Heart right ventricle (tissue), 16 donors: ENCODE measurements at regions of chr5 and their contacts with region 1.

Region 1: DNA sequence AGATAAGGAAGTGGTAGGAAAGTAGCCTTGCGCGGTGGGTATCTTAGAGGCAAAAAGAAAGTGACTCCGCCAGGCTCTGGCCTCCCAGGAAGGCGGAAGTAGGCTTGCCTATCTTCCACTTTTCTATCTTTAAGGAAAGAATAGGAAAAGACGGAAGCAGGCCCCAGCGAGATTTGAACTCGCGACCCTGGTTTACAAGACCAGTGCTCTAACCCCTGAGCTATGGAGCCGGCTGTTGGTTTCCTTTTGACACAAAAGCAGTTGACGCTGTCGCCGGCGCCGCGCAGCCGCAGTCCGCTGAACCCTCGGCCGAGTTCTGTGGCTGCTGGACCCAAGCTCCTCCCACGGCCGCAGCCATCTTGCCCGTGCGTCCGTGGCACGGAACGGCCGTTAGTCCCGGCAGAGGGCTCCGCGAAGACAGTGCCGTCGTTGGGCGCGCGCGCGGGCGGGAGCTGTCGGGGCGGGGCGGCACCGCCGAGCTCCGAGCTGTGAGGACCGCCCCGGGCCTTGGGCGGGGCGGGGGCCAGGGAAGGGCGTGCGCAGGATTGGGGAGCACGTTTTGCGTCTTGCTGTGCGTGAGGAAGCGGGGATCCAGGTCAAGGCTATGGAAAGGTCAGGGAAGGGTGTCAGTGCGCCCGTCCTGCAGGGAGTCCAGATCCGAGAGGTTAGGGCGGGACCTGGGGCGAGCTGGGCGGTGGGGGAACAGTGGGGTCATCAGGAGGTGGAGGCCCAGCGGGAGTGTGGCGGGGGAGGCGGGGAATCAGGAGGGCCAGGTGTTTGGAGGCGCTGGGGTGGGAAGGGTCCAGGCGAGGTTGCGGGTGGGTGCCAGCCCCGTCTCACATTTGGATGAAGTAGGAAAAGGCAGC is 13.2 kb downstream of the TRIM7 start:
- DNase-seq: peak; percentile 94 to 96
- ATAC-seq: peak; percentile 79 to 90 (median 82)
- H3K4me3 ChIP-seq: peak overlapping the region; percentile 66 to 96 (median 81)
- H3K27ac ChIP-seq: peak overlapping the region; percentile 84 to 96 (median 92)
- H3K4me1 ChIP-seq: peaks cover 3 to 51% (median 24%) of the 10 kb centered on the region in 9 donors
- H3K27me3 ChIP-seq: peaks cover 0 to 5% (median 0%) of the 10 kb centered on the region in 7 donors
- CTCF ChIP-seq: peak in 3 of 9 donors; percentile 19 to 33 (median 23)

Region 2: DNA sequence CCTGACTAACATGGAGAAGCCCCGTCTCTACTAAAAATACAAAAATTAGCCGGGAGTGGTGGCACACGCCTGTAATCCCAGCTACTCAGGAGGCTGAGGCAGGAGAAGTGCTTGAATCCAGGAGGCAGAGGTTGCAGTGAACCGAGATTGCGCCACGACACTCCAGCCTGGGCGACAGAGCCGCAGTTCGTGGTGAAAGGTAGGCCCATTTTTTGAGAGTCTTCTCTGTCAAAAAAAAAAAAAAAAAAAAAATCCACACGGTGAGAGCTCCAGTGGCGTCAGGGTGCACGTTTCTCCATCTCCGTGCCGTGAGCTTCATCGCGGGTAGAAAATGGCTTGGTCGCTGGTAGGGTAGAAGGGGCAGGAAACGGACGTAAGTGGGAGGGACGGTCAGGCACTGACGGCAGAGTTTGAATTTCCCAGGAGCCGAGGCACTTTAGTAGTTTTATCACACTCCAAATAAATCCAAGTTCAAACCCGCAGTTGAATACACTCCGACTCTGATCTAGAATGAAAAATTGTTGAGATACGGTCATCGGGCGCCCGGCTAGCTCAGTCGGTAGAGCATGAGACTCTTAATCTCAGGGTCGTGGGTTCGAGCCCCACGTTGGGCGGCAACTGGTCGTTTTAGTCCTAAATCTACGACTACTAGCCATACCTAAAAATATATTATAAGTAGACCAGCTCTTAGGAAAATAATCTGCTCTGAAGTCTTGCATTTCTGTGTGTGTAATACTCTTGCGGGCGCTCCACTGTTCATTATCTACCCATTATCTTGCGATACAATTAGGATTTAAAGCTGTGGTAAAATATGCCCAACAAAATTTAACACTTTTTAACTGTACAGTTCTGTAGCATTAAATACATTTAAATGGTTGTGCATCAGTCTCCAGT is 15.7 kb after region 1 on chr5:
- intact Hi-C with region 1: loop called in 6 of 10 experiments (anchors 1 to 2 kb)
- DNase-seq: peak; percentile 78 to 80
- ATAC-seq: peak; percentile 35 to 73 (median 52)
- H3K4me3 ChIP-seq: peak overlapping the region; percentile 22 to 90 (median 74)
- H3K27ac ChIP-seq: peak overlapping the region in 9 of 10 donors; percentile 77 to 87 (median 82)
- H3K4me1 ChIP-seq: peaks cover 7 to 47% (median 37%) of the 10 kb centered on the region in 9 donors
- H3K27me3 ChIP-seq: peaks cover 0 to 28% (median 0%) of the 10 kb centered on the region in 7 donors
- CTCF ChIP-seq: no peak

Region 3: DNA sequence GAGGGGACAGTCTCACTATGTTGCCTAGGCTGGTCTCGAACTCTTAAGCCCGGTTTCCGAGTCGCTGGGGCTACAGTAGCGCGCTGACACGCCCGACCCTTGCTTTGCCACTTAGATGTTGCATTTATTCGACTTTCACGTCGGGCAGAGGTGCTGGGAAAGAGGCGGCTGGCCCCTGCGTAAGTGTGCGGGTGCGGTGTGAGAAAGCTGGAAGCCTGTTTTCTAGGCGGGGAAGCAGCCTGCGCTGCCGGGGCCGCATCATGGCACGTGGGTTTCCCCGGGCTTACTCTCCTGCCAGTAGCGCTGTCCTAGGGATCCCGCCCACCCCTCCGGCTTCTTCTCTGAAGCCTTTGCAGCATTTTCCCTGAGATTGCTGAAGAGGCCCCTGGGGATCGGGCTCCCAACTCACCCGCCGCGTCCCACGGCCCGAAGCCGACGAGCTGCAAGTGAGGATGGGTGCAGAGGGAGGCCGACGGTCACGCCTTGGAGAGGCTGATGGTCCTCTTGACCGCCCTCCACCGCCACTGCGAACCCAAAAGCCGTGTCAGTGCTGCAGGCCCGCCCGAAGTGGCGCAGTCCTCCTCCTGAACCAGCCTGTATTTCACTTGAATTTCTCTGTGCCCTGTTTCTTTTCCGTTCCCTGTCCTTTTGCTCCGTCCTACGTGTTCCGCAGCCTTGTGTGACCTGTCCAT is 25.5 kb after region 1 on chr5:
- intact Hi-C with region 1: loop called in 6 of 10 experiments (anchors 1 to 2 kb)
- DNase-seq: peak; percentile 44 to 52
- ATAC-seq: peak; percentile 18 to 52 (median 40)
- H3K4me3 ChIP-seq: peak overlapping the region; percentile 0 to 69 (median 57)
- H3K27ac ChIP-seq: peak overlapping the region; percentile 17 to 82 (median 68)
- H3K4me1 ChIP-seq: peaks cover 0 to 40% (median 26%) of the 10 kb centered on the region in 9 donors
- H3K27me3 ChIP-seq: peaks cover 0 to 7% (median 0%) of the 10 kb centered on the region in 7 donors
- CTCF ChIP-seq: peak in 2 of 9 donors; percentile 12 to 13

Region 4: GRCh38 chr5:181223058-181223728 is 31.4 kb after region 1 on chr5 and contains the start of gene TRIM41:
- intact Hi-C with region 1: loop called in 8 of 10 experiments (anchors 1 to 2 kb)
- DNase-seq: peak; percentile 99
- ATAC-seq: peak; percentile 85 to 94 (median 92)
- H3K4me3 ChIP-seq: peak within 1 kb of the TSS; percentile 53 to 96 (median 84)
- H3K27ac ChIP-seq: peak within 1 kb of the TSS; percentile 84 to 99 (median 96)
- H3K4me1 ChIP-seq: peaks cover 0 to 42% (median 11%) of the 10 kb centered on the region in 9 donors
- H3K27me3 ChIP-seq: no peaks in the 10 kb centered on the region
- CTCF ChIP-seq: peak in 5 of 9 donors; percentile 22 to 42 (median 30)
- total RNA-seq, gene TRIM41: 17.3 to 28.2 (median 26.0) TPM

Region 5: DNA sequence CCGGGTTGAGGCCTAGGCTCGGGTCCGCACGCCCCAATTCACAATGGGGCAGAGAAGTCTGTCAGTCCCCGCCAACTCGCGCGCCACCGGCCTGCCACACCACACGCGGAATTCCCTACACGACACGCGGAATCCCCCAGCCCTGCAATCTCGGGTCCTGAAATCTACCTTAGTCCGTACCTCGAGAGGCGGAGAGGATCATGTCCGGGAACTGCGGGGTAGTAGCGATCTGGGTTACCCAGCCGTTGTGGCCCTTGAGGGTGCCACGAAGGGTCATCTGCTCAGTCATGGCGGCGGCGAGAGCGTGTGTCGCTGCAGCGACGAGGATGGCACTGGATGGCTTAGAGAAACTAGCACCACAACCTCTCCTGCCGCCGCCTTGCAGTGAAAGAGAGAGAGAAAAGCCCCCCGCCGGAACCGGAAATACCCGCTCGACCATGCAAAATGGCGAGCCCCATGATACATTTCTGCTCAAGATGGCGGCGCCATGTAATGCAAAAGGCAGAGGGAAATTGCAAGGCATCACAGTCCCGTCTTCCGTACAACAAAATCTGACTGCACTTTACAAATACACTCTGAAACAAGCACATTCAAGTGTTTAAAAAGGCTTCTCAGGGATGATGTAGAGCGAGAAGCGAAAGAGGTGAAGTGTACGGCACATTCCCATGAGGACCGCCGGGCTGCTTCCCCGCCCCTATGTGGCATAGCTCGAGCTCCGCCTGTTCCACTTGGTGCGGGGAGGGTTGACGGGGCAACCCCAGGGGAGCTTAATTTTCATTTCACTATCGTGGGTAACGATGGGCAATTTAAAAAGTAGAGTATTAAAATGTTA is 52.0 kb after region 1 on chr5 and contains the start of gene RACK1:
- intact Hi-C with region 1: loop called in 3 of 10 experiments (anchors 1 to 10 kb)
- DNase-seq: peak; percentile 85 to 93
- ATAC-seq: peak; percentile 61 to 76 (median 70)
- H3K4me3 ChIP-seq: peak within 1 kb of the TSS; percentile 76 to 94 (median 80)
- H3K27ac ChIP-seq: peak within 1 kb of the TSS; percentile 66 to 99 (median 96)
- H3K4me1 ChIP-seq: peaks cover 23 to 77% (median 58%) of the 10 kb centered on the region in 9 donors
- H3K27me3 ChIP-seq: no peaks in the 10 kb centered on the region
- CTCF ChIP-seq: no peak
- total RNA-seq, gene RACK1: 581 to 916 (median 631) TPM

Region 6: DNA sequence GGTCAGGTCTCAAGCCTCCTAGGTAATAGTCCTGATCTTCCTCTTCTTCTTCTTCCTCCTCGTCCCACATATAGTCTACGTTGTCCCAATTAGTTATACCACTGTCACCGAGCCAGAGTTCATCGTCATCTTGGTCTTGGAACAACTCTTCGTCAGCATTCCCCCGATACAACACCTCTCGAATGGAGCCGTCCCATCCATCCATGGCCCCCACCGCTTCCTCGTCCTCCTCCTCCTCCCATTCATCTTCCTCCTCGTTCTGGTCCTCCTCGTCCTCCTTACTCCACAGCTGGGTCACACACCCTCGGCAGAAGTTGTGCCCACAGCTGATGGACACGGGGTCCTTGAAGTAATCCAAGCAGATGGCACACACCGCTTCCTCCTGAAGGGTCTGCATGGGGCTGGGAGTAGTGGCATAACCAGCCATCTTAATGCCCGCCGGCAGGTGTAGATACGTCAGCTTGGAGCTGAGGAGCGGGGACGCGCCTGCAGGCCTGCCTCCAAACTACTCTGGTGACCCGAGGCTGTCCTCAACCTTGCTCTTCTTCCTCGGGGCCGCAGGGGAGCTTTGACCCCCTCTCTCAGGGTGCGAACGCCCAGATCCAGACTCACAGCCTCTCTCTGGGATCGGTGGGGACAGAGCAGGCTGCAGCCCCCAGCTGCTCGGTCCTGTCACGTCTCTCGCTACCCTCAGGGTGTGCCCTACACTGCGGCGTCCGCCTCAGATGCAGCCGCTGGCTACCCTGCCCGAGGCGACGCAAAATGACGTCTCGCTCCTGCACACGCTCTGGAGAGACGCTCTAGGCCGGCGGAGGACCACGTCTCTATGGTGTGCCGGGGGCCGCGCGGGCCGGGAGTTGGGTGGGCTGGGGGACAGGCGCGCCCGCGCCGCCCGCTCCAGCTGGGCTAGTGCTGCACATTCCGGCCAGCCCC is 68.9 kb after region 1 on chr5 and contains the start of gene TRIM52:
- intact Hi-C with region 1: loop called in 7 of 10 experiments (anchors 5 to 10 kb)
- DNase-seq: peak; percentile 93
- ATAC-seq: peak; percentile 90 to 97 (median 94)
- H3K4me3 ChIP-seq: peak within 1 kb of the TSS; percentile 73 to 99 (median 92)
- H3K27ac ChIP-seq: peak within 1 kb of the TSS; percentile 98 to 100 (median 100)
- H3K4me1 ChIP-seq: peaks cover 11 to 64% (median 51%) of the 10 kb centered on the region in 9 donors
- H3K27me3 ChIP-seq: no peaks in the 10 kb centered on the region
- CTCF ChIP-seq: peak in 1 of 9 donors; percentile 13
- total RNA-seq, gene TRIM52: 5.5 to 15.8 (median 7.5) TPM